GM12878 (cell line): ENCODE measurements at regions of chr12 and their contacts with region 1.

Region 1: DNA sequence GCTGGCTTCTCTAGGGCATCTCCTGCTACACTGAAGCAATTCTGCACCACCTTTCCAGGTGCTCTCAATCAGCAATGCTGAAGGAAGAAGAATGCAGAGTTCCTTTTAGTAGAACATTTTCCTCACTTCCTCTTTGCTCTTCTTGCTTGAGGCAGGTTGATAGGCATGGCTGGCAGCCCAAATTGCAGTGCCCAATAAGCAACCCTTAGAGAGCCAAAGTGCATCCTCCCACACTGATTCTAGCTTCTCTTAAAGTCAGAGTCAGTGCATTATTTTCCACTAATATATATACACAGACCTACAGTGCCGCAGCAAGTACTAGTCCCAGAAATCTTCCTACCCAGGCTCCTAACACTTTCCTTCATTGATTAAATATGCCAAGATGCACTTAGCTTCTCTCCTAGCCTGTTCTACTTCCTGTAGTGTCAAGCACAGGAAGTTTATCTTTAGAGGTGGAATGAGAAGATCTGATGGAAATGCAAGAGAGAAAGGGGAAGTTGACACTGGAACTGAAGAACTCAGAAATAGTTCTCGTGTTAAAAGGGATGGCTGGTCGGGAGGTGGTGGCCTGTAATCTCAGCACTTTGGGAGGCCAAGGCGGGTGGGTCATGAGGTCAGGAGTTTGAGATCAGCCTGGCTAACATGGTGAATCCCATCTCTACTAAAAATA is 132.7 kb downstream of the SSPN start:
- DNase-seq: no peak
- ATAC-seq: peak; percentile 88
- H3K4me3 ChIP-seq: no peak overlapping the region
- H3K27ac ChIP-seq: no peak overlapping the region
- H3K4me1 ChIP-seq: peaks cover 5% of the 10 kb centered on the region
- H3K27me3 ChIP-seq: no peaks in the 10 kb centered on the region
- CTCF ChIP-seq: no peak
- EP300 ChIP-seq: no peak
- POLR2A ChIP-seq: no peak
- RAD21 ChIP-seq: no peak

Region 2: DNA sequence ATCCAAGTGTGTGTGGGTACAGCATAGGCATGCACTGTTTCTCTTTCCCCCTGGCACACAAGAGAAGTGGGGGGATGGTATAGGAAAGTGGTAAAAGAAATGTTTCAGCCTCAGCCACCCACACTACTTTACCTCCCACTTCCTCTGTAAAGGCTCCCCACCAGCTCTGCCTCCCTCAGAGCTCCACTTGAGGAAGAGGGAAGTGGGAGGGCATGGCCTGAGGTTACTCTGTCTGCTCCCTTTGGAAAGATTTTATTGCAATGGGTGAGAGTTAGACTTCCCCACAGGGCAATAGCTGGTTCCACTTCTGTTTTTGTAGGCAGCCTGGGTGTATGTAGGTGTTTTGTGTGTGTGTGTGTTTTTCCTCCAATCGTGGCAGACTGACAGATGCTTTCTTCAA is 12.5 kb after region 1 on chr12:
- CTCF ChIA-PET with region 1: interaction called, 4 read pairs
- POLR2A ChIA-PET with region 1: no interaction called
- RAD21 ChIA-PET with region 1: interaction called, 3 read pairs
- SMC1A ChIA-PET with region 1: interaction called, 22 read pairs
- in situ Hi-C with region 1: no loop called
- intact Hi-C with region 1: no loop called
- DNase-seq: peak; percentile 37
- ATAC-seq: peak; percentile 87
- H3K4me3 ChIP-seq: no peak overlapping the region
- H3K27ac ChIP-seq: no peak overlapping the region
- H3K4me1 ChIP-seq: peaks cover 20% of the 10 kb centered on the region
- H3K27me3 ChIP-seq: no peaks in the 10 kb centered on the region
- CTCF ChIP-seq: no peak
- EP300 ChIP-seq: no peak
- POLR2A ChIP-seq: no peak
- RAD21 ChIP-seq: no peak

Region 3: GRCh38 chr12:26599096-26599695 is 271.1 kb after region 1 on chr12:
- CTCF ChIA-PET with region 1: no interaction called
- POLR2A ChIA-PET with region 1: no interaction called
- RAD21 ChIA-PET with region 1: no interaction called
- SMC1A ChIA-PET with region 1: no interaction called
- in situ Hi-C with region 1: no loop called
- intact Hi-C with region 1: no loop called
- DNase-seq: no peak
- ATAC-seq: no peak
- H3K4me3 ChIP-seq: no peak overlapping the region
- H3K27ac ChIP-seq: no peak overlapping the region
- H3K4me1 ChIP-seq: no peaks in the 10 kb centered on the region
- H3K27me3 ChIP-seq: no peaks in the 10 kb centered on the region
- CTCF ChIP-seq: no peak
- EP300 ChIP-seq: no peak
- POLR2A ChIP-seq: no peak
- RAD21 ChIP-seq: no peak